Body of pancreas (tissue), 4 donors: ENCODE measurements at regions of chr16 and their contacts with region 1.

Region 1: DNA sequence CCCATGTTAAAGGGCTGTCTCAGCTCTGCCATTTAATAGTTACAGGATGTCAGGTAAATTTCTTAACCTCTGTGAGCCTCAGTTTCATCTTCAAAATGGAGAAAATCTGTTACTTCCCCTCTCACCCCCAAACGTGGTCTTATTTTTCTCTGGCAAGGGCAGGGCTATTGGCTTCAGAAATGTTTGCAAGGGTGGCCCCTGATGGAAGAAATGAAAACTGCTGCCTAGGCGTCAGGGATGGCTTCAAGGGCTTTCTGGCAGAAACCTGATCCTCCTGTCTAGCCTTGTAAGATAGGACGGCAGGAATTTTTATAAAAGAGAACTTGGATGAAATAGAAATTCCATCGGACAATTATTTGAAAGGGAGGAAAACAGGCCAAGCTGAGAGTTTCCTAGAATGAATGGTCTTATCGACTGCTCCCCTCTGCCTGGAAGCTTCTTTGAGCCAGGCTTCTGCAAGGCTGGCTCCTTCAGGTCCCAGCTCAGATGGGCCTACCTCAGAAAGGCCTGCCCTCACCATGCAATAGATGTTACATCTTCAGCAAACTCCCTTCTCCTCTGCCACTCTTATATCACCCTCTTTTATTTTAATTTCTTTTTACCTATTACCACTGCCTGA is 43.0 kb upstream of the TANGO6 start:
- DNase-seq: peak; percentile 71 to 77 (median 74)
- ATAC-seq: peak; percentile 86
- H3K4me3 ChIP-seq: no peak overlapping the region
- H3K27ac ChIP-seq: peak overlapping the region in 3 of 4 donors; percentile 51 to 75 (median 54)
- H3K4me1 ChIP-seq: peaks cover 37% of the 10 kb centered on the region
- H3K27me3 ChIP-seq: no peaks in the 10 kb centered on the region
- CTCF ChIP-seq: peak; percentile 22 to 93 (median 85)
- POLR2A ChIP-seq: no peak

Region 2: DNA sequence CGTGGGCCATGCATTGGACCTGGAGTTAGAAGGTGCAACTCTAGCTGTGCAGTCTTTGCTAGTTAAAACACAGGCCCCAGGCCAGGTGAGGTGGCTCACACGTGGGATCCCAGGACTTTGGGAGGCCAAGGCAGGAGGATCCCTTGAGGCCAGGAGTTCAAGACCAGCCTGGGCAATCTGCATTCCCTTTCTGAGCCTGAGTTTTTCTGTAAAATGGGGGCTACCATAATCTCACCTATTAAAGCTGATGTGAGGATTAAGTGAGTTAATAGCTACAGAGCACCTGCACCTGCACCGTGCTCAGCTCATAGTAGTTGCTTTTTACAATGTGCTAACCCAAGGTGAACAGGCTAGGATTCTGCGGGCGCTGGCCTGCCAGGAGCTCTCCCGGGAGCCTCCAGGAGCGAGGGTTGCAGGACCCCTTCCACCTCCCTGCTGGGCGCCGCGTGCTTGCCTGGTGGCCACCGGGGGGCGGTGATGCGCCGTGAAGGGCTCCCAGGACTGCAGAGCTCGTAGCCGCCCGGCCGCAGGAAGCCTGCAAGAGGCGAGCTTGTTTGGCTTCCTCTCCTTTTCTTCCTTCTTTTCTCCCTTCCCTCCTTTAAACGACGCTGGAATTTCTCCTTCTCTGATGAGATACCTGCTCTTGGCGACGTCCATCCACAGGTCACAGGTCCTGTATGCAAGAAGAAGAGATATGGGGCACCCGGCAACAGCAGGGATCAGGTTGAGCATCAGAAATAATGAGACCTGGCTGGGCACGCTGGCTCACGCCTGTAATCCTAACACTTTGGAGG is 210.0 kb before region 1 on chr16:
- intact Hi-C with region 1: loop called (anchors 10 kb)
- DNase-seq: peak; percentile 68 to 80 (median 74)
- ATAC-seq: peak; percentile 89
- H3K4me3 ChIP-seq: no peak overlapping the region
- H3K27ac ChIP-seq: no peak overlapping the region
- H3K4me1 ChIP-seq: peaks cover 6% of the 10 kb centered on the region
- H3K27me3 ChIP-seq: no peaks in the 10 kb centered on the region
- CTCF ChIP-seq: peak; percentile 57 to 78 (median 72)
- POLR2A ChIP-seq: no peak

Region 3: DNA sequence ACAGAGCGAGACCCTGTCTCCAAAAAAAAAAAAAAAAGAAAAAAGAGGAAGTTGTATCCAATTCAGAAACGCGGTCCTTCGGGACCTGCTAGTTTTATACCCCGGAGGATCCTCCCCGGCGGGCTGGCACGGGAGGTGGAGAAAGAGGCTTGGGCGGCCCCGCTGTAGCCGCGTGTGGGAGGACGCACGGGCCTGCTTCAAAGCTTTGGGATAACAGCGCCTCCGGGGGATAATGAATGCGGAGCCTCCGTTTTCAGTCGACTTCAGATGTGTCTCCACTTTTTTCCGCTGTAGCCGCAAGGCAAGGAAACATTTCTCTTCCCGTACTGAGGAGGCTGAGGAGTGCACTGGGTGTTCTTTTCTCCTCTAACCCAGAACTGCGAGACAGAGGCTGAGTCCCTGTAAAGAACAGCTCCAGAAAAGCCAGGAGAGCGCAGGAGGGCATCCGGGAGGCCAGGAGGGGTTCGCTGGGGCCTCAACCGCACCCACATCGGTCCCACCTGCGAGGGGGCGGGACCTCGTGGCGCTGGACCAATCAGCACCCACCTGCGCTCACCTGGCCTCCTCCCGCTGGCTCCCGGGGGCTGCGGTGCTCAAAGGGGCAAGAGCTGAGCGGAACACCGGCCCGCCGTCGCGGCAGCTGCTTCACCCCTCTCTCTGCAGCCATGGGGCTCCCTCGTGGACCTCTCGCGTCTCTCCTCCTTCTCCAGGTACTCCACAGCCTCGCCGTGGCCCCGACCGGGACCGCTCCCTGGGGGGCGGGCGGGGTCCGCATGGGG is 155.5 kb before region 1 on chr16 and contains the start of gene CDH3:
- intact Hi-C with region 1: no loop called
- DNase-seq: peak; percentile 51 to 74 (median 57)
- ATAC-seq: peak; percentile 67
- H3K4me3 ChIP-seq: peak within 1 kb of the TSS; percentile 23 to 25
- H3K27ac ChIP-seq: no peak within 1 kb of the TSS
- H3K4me1 ChIP-seq: peaks cover 27% of the 10 kb centered on the region
- H3K27me3 ChIP-seq: peaks cover 0 to 21% of the 10 kb centered on the region in 2 donors
- CTCF ChIP-seq: no peak
- POLR2A ChIP-seq: no peak
- total RNA-seq, gene CDH3: 0.66 to 4.7 TPM

Region 4: GRCh38 chr16:68707341-68708152 is 92.8 kb before region 1 on chr16:
- intact Hi-C with region 1: loop called (anchors 2 kb)
- DNase-seq: peak; percentile 69 to 85 (median 75)
- ATAC-seq: peak; percentile 64
- H3K4me3 ChIP-seq: no peak overlapping the region
- H3K27ac ChIP-seq: peak overlapping the region in 3 of 4 donors; percentile 57 to 74 (median 72)
- H3K4me1 ChIP-seq: peaks cover 10% of the 10 kb centered on the region
- H3K27me3 ChIP-seq: no peaks in the 10 kb centered on the region
- CTCF ChIP-seq: peak in 3 of 7 experiments; percentile 28 to 38 (median 33)
- POLR2A ChIP-seq: no peak